ENCODE measurements at regions of chr14 and their contacts with region 1.

Region 1: GRCh38 chr14:52473557-52473956 is 78.7 kb downstream of the TXNDC16 start:
- DNase-seq: peak in 2 of 9 experiments; percentile 66 to 73
- ATAC-seq: peak; percentile 42
- H3K4me3 ChIP-seq: no peak overlapping the region
- H3K4me3 Mint-ChIP-seq: no peak overlapping the region
- H3K27ac ChIP-seq: no peak overlapping the region
- H3K27ac Mint-ChIP-seq: no peak overlapping the region
- H3K4me1 ChIP-seq: no peaks in the 10 kb centered on the region
- H3K4me1 Mint-ChIP-seq: peaks cover 13% of the 10 kb centered on the region
- H3K27me3 ChIP-seq: no peaks in the 10 kb centered on the region
- H3K27me3 Mint-ChIP-seq: no peaks in the 10 kb centered on the region
- CTCF ChIP-seq: peak; percentile 62

Region 2: DNA sequence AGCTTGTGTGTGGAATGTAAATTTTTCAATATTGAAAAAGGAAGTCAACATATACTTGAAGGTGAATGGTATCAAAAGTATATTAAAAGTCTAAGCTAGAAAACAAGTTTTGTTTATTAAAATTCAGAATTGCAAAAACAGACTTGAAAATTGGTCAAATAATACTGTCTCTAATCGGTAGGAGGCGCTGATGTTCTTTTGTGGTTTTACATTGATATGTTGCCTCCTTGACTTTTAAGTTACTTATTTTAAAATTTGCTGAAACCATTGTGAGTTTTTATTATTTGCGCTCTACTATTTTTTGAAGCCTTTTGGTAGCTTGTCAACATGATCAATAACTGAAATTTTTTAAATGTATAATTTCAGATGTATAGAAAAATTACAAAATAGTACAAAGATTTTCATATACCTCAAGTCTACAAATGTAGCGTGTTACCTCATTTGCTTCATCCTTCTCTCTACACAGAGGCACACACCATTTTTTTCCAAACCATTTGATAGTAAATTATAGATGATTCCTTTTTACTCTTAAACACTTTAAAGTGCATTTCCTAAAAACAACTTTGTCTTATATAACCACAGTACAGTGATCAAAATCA is 477.3 kb before region 1 on chr14:
- CTCF ChIA-PET with region 1: interaction called, 3 read pairs
- POLR2A ChIA-PET with region 1: no interaction called
- intact Hi-C with region 1: loop called (anchors 2 to 5 kb)
- DNase-seq: peak in 2 of 9 experiments; percentile 58 to 68
- ATAC-seq: peak; percentile 52
- H3K4me3 ChIP-seq: no peak overlapping the region
- H3K4me3 Mint-ChIP-seq: no peak overlapping the region
- H3K27ac ChIP-seq: no peak overlapping the region
- H3K27ac Mint-ChIP-seq: no peak overlapping the region
- H3K4me1 ChIP-seq: no peaks in the 10 kb centered on the region
- H3K4me1 Mint-ChIP-seq: peaks cover 38% of the 10 kb centered on the region
- H3K27me3 ChIP-seq: no peaks in the 10 kb centered on the region
- H3K27me3 Mint-ChIP-seq: no peaks in the 10 kb centered on the region
- CTCF ChIP-seq: peak; percentile 78

Region 3: GRCh38 chr14:52299692-52300278 is 173.8 kb before region 1 on chr14:
- CTCF ChIA-PET with region 1: interaction called, 26 read pairs
- POLR2A ChIA-PET with region 1: no interaction called
- intact Hi-C with region 1: loop called (anchors 1 kb)
- DNase-seq: peak in 2 of 9 experiments; percentile 60 to 74
- ATAC-seq: peak; percentile 49
- H3K4me3 ChIP-seq: no peak overlapping the region
- H3K4me3 Mint-ChIP-seq: no peak overlapping the region
- H3K27ac ChIP-seq: no peak overlapping the region
- H3K27ac Mint-ChIP-seq: no peak overlapping the region
- H3K4me1 ChIP-seq: no peaks in the 10 kb centered on the region
- H3K4me1 Mint-ChIP-seq: peaks cover 30% of the 10 kb centered on the region
- H3K27me3 ChIP-seq: no peaks in the 10 kb centered on the region
- H3K27me3 Mint-ChIP-seq: no peaks in the 10 kb centered on the region
- CTCF ChIP-seq: peak; percentile 96

Region 4: DNA sequence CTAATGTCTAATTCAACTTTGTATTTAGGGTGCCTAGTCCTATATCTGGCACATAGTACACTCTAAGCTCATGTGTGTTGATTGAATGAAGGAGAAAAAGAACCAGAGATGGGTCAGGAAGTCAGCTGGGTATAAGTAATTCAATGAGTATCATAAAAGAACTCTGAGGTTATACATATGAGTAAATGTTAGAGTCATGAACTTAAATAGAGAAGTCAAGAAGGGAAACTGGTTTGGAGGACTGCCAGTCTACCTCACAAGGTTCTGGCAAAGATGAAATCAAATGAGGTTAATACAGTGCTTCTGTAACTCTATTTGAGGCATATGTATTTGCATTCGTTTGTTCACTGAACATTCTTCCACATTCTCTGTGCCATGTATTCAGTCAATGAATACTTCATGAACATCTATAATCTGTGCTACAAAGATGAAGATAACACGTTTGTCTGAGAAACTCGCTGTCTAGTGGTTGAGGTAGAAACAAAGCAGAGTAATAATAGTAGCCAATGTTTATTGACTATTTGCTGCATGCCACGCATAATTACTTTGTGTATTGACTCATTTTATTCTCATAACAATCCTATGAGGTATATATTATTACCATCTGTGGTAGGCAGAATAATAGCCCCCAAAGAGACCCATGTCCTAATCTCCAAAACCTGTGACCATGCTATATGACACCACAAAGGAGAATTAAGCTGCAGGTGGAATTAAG is 70.6 kb before region 1 on chr14:
- CTCF ChIA-PET with region 1: no interaction called
- POLR2A ChIA-PET with region 1: no interaction called
- intact Hi-C with region 1: loop called in 1 of 2 experiments (anchors 5 kb)
- DNase-seq: peak in 2 of 9 experiments; percentile 28 to 43
- ATAC-seq: peak; percentile 69
- H3K4me3 ChIP-seq: no peak overlapping the region
- H3K4me3 Mint-ChIP-seq: no peak overlapping the region
- H3K27ac ChIP-seq: no peak overlapping the region
- H3K27ac Mint-ChIP-seq: peak overlapping the region; percentile 34
- H3K4me1 ChIP-seq: peaks cover 47% of the 10 kb centered on the region
- H3K4me1 Mint-ChIP-seq: peaks cover 57% of the 10 kb centered on the region
- H3K27me3 ChIP-seq: no peaks in the 10 kb centered on the region
- H3K27me3 Mint-ChIP-seq: no peaks in the 10 kb centered on the region
- CTCF ChIP-seq: no peak

Region 5: DNA sequence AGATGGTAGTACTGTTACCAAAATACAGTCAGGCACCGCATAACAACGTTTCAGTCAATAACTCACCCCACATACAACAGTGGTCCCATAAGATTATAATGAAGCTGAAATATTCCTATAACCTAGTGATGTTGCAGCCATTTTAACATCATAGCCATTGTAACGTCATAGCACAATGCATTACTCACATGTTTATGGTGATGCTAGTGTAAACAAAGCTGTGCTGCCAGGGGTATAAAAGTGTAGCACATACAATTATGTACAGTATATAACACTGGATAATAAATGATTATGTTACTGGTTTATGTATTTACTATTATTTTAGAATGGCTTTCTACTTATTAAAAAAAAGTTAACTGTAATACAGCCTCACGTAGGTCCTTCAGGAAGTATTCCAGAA is 116.1 kb after region 1 on chr14:
- CTCF ChIA-PET with region 1: no interaction called
- POLR2A ChIA-PET with region 1: no interaction called
- intact Hi-C with region 1: no loop called
- DNase-seq: no peak
- ATAC-seq: no peak
- H3K4me3 ChIP-seq: no peak overlapping the region
- H3K4me3 Mint-ChIP-seq: no peak overlapping the region
- H3K27ac ChIP-seq: no peak overlapping the region
- H3K27ac Mint-ChIP-seq: no peak overlapping the region
- H3K4me1 ChIP-seq: no peaks in the 10 kb centered on the region
- H3K4me1 Mint-ChIP-seq: no peaks in the 10 kb centered on the region
- H3K27me3 ChIP-seq: no peaks in the 10 kb centered on the region
- H3K27me3 Mint-ChIP-seq: peaks cover 2% of the 10 kb centered on the region
- CTCF ChIP-seq: no peak

Measured in CD8-positive, alpha-beta T cell (primary cell).